A673 (cell line): ENCODE measurements at regions of chr15 and their contacts with region 1.

Region 1: GRCh38 chr15:84929744-84930371 is 45.4 kb downstream of the SLC28A1 start:
- DNase-seq: peak; percentile 28
- H3K4me3 ChIP-seq: no peak overlapping the region
- H3K27ac ChIP-seq: no peak overlapping the region
- H3K4me1 ChIP-seq: no peaks in the 10 kb centered on the region
- H3K27me3 ChIP-seq: no peaks in the 10 kb centered on the region
- CTCF ChIP-seq: no peak

Region 2: DNA sequence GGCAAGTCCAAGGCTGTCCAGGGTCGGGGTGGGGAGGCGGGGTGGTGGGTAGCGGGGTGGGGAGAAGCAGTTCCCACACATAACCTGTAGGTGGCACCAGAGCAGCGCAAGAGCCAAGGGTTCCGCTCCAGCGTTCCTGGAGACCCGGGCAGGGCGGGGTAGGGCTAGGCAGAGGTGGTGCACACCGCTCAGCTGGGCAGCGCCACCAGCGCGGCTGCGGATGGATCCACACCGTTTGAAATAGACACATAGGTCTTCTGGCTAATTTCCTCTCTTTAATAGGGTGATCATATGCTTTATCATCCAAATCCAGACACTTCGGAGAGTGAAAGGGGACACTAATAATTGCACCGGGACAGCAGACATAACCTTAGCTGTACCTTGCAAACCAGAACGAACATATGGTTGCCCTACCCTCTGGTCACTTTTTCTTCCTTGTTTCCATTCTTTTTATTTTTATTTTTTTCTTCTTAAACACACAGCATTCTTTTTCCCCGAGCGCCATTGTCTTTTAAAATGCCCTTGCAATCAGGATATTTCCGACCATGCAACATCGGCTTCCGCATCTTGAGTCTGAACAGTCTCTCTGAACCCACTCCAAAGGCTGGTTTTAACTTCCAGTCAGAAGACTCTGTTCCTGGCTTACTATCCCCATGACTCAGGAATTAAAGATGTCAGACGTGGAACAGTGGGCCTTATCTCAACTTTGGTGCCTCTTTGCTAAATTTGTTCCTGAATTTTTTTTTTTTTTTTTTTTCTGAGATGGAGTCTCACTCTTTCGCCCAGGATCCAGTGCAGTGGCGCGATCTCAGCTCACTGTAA is 341.6 kb before region 1 on chr15:
- CTCF ChIA-PET with region 1: interaction called, 15 read pairs
- POLR2A ChIA-PET with region 1: no interaction called
- intact Hi-C with region 1: loop called (anchors 2 kb)
- DNase-seq: peak; percentile 91
- H3K4me3 ChIP-seq: peak overlapping the region; percentile 39
- H3K27ac ChIP-seq: no peak overlapping the region
- H3K4me1 ChIP-seq: peaks cover 12% of the 10 kb centered on the region
- H3K27me3 ChIP-seq: no peaks in the 10 kb centered on the region
- CTCF ChIP-seq: peak; percentile 70

Region 3: DNA sequence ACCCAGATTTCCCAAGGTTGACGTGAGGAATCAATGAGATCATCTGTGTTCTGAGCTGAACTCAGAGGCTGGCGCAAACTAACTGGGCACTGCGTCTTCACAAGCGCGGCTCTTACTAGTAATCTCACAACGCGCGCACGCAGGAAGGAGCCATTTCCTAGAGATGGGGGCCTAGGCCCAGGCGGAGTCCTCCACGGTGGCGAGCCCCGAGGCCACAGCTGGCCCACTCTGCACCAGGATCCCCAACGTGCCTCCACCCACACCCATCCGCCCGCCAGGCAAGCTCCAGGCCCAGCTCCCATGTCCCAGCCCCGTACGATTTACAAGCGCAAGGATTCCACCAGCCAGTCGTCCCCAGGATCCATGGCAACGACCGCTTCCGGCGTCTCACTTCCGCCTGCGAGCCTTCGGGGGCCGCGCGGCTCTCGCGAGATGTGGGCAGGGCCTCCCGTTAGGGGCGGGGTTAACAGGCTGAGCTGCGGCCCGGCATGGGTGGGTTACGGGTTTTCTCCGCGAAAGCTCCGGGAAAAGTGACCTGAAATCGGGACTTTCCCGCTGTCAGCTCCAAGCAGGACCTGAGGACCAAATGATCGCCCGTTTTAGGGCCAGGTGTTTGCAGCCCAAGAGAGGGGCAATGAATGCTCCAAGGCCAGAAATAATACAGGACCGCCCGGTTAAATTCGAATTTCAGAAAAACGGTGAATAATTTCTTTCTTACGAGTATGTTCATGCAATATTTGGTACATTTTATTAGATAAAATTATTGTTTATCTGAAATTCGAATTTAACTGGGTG is 275.8 kb before region 1 on chr15 and contains the start of gene WDR73:
- CTCF ChIA-PET with region 1: interaction called, 4 read pairs
- POLR2A ChIA-PET with region 1: interaction called, 3 read pairs
- intact Hi-C with region 1: loop called (anchors 2 kb)
- DNase-seq: peak; percentile 97
- H3K4me3 ChIP-seq: peak within 1 kb of the TSS; percentile 67
- H3K27ac ChIP-seq: peak within 1 kb of the TSS; percentile 73
- H3K4me1 ChIP-seq: peaks cover 24% of the 10 kb centered on the region
- H3K27me3 ChIP-seq: no peaks in the 10 kb centered on the region
- CTCF ChIP-seq: no peak
- total RNA-seq, gene WDR73: 42.4 and 43.6 TPM in 2 replicates

Region 4: DNA sequence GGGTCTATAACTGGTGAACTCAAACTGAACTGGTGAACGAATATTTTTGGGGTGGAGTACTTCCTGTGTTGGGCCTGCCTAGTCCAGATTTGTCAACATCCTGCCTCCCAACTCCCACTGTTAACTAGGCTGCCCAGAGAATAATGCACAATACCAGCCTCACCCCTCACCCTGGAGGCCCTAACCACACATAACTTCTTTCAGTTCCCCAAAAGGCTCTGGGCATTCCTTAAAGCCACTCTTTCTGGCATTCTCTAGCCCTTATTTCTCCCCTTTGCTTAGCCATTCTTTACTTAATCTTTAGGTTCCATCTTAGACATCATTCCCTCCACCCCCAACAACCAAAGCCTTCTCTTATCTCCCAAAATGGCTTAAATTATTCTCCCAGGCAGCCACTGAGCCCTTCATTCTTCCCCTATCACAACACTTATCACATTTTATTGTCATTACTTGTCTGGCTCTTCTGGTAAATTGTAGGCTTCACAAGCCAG is 204.8 kb before region 1 on chr15:
- CTCF ChIA-PET with region 1: no interaction called
- POLR2A ChIA-PET with region 1: no interaction called
- intact Hi-C with region 1: no loop called
- DNase-seq: no peak
- H3K4me3 ChIP-seq: no peak overlapping the region
- H3K27ac ChIP-seq: no peak overlapping the region
- H3K4me1 ChIP-seq: no peaks in the 10 kb centered on the region
- H3K27me3 ChIP-seq: no peaks in the 10 kb centered on the region
- CTCF ChIP-seq: no peak

Region 5: GRCh38 chr15:84797212-84797611 is 132.6 kb before region 1 on chr15:
- CTCF ChIA-PET with region 1: interaction called, 14 read pairs
- POLR2A ChIA-PET with region 1: no interaction called
- intact Hi-C with region 1: no loop called
- DNase-seq: no peak
- H3K4me3 ChIP-seq: no peak overlapping the region
- H3K27ac ChIP-seq: no peak overlapping the region
- H3K4me1 ChIP-seq: no peaks in the 10 kb centered on the region
- H3K27me3 ChIP-seq: no peaks in the 10 kb centered on the region
- CTCF ChIP-seq: no peak

Region 6: GRCh38 chr15:84955089-84955848 is 25.4 kb after region 1 on chr15:
- CTCF ChIA-PET with region 1: no interaction called
- POLR2A ChIA-PET with region 1: no interaction called
- intact Hi-C with region 1: no loop called
- DNase-seq: peak; percentile 92
- H3K4me3 ChIP-seq: peak overlapping the region; percentile 20
- H3K27ac ChIP-seq: peak overlapping the region; percentile 69
- H3K4me1 ChIP-seq: peaks cover 26% of the 10 kb centered on the region
- H3K27me3 ChIP-seq: no peaks in the 10 kb centered on the region
- CTCF ChIP-seq: peak; percentile 93